CD4-positive, alpha-beta T cell (primary cell): ENCODE measurements at regions of chr17 and their contacts with region 1.

Region 1: DNA sequence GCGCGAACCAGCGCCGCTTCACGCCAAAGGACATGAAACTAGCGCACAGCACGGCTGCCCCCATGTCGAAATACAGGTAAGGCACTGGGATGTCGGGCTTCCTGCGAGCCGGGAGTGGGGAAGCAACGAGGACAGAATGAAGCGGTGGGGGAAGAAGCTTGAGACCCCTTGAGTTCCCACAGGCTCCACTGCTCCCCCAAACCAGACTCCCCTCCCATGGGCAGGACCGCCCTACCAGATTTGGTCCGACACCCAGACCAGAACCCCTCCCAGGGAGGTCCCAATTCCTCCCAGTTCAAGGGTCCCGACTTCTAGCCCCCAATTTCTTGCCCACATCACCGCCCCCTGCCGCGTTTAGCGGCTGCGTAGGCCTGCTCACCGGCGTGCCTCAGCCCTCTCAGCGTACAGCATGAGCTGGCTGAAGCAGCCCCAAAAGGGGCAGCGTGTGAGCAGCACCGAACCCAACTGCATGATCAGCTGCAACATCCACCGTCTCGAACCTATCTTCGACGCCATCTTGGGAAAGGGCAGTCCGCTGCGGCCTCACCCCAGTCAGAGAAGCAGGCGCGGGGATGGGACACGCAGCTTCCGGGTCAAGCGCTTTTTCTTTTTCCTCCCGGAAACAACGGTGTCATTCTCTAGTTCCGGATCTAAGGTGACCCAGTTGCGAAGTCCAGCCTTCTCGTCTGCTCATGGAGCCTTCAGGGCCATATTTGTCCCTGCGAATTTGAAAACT is at the start of gene TMEM101:
- DNase-seq: peak; percentile 81 to 95 (median 86)
- ATAC-seq: peak; percentile 99
- H3K4me3 ChIP-seq: peak within 1 kb of the TSS; percentile 94
- H3K4me3 Mint-ChIP-seq: peak within 1 kb of the TSS; percentile 100
- H3K27ac ChIP-seq: no peak within 1 kb of the TSS
- H3K27ac Mint-ChIP-seq: peak within 1 kb of the TSS; percentile 87
- H3K4me1 ChIP-seq: peaks cover 19% of the 10 kb centered on the region
- H3K4me1 Mint-ChIP-seq: peaks cover 22% of the 10 kb centered on the region
- H3K27me3 ChIP-seq: no peaks in the 10 kb centered on the region
- H3K27me3 Mint-ChIP-seq: peaks cover 5% of the 10 kb centered on the region
- CTCF ChIP-seq: no peak
- total RNA-seq, gene TMEM101: 8.8 to 9.7 TPM

Region 2: GRCh38 chr17:43714465-43715149 is 300.0 kb before region 1 on chr17:
- CTCF ChIA-PET with region 1: no interaction called
- POLR2A ChIA-PET with region 1: no interaction called
- intact Hi-C with region 1: loop called in 1 of 2 experiments (anchors 5 kb)
- DNase-seq: no peak
- ATAC-seq: no peak
- H3K4me3 ChIP-seq: no peak overlapping the region
- H3K4me3 Mint-ChIP-seq: peak overlapping the region; percentile 13
- H3K27ac ChIP-seq: no peak overlapping the region
- H3K27ac Mint-ChIP-seq: no peak overlapping the region
- H3K4me1 ChIP-seq: peaks cover 9% of the 10 kb centered on the region
- H3K4me1 Mint-ChIP-seq: peaks cover 13% of the 10 kb centered on the region
- H3K27me3 ChIP-seq: peaks cover 19 to 29% of the 10 kb centered on the region in 2 experiments
- H3K27me3 Mint-ChIP-seq: peaks cover 49% of the 10 kb centered on the region
- CTCF ChIP-seq: no peak

Region 3: GRCh38 chr17:43998552-43998951 is 16.1 kb before region 1 on chr17:
- CTCF ChIA-PET with region 1: no interaction called
- POLR2A ChIA-PET with region 1: no interaction called
- intact Hi-C with region 1: no loop called
- DNase-seq: peak in 1 of 14 experiments; percentile 24
- ATAC-seq: no peak
- H3K4me3 ChIP-seq: no peak overlapping the region
- H3K4me3 Mint-ChIP-seq: no peak overlapping the region
- H3K27ac ChIP-seq: no peak overlapping the region
- H3K27ac Mint-ChIP-seq: no peak overlapping the region
- H3K4me1 ChIP-seq: peaks cover 10% of the 10 kb centered on the region
- H3K4me1 Mint-ChIP-seq: no peaks in the 10 kb centered on the region
- H3K27me3 ChIP-seq: peaks cover 9 to 13% of the 10 kb centered on the region in 2 experiments
- H3K27me3 Mint-ChIP-seq: peaks cover 39% of the 10 kb centered on the region
- CTCF ChIP-seq: no peak

Region 4: DNA sequence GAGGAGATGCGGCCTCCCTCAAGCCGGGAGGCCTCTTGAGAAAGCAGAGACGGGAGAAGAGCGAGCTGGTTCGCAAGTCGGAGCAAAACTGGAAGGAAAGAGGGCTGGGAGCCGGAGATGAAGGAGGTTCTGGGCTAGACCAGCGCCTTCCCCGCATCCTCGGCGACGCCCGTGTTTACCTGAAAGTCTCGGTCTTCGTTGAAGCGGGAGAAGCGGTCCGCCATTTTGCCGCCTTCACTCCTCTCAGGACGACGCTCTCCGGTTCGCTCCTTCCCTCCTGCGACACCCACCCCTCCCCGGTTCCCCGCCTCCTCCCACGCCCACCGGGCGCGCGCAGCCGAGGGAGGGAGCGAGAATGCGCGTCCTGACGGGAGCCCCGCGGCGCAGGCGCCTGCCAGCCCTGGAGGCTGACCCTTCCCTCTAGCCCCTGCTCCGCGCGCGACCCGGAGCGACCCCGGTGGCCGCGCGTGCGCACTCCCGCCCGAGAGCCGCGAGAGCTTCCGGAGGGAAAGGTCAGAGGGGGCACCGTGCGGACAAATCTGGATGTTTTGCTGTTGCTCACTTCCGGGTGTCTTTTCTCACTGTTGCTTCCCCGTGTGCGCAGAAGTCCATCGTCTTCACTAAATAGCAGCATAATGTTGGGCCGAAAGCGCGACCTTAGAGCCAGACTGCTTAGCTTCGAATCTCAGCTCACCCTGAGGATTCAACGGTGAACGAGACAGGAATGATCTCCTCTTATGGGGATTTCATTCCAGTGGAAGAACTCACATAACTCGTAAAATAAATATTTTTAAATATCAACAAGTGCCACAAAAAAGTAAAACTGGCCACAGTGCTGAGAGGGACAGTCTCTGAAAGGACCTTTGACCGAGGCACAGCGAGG is 488.8 kb after region 1 on chr17 and contains the start of gene GPATCH8:
- CTCF ChIA-PET with region 1: no interaction called
- POLR2A ChIA-PET with region 1: no interaction called
- intact Hi-C with region 1: loop called in 1 of 2 experiments (anchors 2 kb)
- DNase-seq: peak; percentile 83 to 97 (median 92)
- ATAC-seq: peak; percentile 86
- H3K4me3 ChIP-seq: peak within 1 kb of the TSS; percentile 95
- H3K4me3 Mint-ChIP-seq: peak within 1 kb of the TSS; percentile 91
- H3K27ac ChIP-seq: peak within 1 kb of the TSS; percentile 80 to 91
- H3K27ac Mint-ChIP-seq: peak within 1 kb of the TSS; percentile 94
- H3K4me1 ChIP-seq: peaks cover 24% of the 10 kb centered on the region
- H3K4me1 Mint-ChIP-seq: peaks cover 54% of the 10 kb centered on the region
- H3K27me3 ChIP-seq: peaks cover 0 to 3% of the 10 kb centered on the region in 2 experiments
- H3K27me3 Mint-ChIP-seq: peaks cover 12% of the 10 kb centered on the region
- CTCF ChIP-seq: no peak
- total RNA-seq, gene GPATCH8: 76.0 to 76.9 TPM